ENCODE measurements at regions of chr15 and their contacts with region 1.

Region 1: DNA sequence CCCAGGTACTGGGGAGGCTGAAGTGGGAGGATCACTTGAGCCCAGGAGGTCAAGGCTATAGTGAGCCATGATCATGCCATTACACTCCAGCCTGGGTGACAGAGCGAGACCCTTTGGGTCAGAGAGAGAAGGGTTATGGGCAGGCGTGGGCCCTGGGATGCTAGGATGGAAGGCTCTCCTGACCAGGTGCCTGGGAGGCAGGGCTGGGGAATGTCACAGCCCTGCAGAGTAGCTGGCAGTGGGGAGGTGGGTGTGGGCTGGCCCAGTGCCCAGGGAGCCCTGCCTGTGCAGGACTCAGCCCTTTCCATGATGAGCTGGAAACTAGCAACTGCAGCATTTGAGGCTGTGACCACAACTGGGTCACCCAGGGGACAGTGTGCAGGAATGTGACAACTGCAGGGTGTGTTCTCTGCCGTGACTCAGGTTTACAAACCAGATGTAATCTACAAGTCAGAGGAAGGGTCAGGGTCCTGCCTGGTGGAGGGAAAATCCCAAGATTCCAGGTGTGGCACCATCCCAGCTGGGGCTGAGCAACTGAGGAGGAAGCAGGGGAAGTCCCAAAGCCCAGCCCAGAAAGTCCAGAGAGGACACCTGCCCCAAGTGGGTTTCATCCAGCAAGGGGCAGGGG is 45.4 kb downstream of the SLC28A1 start:
- DNase-seq: no peak
- ATAC-seq: no peak

Region 2: DNA sequence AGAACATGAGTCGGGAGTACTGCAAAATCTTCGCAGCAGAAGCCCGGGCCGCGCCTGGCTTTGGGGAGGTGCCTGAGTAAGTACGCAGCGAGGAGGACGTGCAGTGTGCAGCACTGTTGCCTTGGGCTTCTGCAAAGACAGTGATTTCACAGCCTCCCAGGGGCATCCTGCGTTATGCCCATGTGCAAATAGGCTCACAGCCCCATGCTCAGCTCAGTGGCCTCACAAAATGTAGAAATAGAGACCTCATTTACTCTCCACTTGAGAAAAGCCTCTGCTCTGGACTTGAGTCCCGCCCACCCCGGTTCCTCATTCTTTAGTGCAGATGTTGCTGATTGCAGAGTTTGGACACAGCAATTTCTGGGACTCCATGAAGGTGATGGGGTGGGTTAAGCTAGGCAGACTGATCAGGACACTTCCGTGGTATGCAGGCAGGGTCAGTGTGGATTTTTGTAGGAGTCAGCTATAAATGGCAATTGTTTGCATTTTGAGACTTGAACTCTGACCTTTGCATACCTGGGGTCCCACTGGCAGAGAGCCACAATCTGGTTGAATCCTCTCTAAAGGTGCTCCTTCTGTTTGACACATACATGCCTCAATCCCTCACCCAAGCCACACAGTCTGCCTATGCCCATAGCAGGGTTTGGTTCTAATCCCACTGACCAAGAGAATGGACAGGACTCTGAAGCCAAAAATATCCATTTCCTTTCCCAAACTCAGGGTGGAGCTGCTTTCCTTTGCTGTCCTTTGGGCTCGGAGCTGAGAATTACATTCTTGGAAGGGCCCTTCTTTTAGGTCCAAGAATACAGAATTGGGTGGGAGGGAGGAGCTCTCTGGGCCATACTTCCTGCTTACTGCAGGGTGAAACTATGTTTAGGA is 66.1 kb before region 1 on chr15:
- intact Hi-C with region 1: loop called (anchors 10 kb)
- DNase-seq: no peak
- ATAC-seq: peak; percentile 29

Measured in left ventricle myocardium superior (tissue), 1 donor.